Heart left ventricle (tissue), 16 donors: ENCODE measurements at regions of chr17 and their contacts with region 1.

Region 1: DNA sequence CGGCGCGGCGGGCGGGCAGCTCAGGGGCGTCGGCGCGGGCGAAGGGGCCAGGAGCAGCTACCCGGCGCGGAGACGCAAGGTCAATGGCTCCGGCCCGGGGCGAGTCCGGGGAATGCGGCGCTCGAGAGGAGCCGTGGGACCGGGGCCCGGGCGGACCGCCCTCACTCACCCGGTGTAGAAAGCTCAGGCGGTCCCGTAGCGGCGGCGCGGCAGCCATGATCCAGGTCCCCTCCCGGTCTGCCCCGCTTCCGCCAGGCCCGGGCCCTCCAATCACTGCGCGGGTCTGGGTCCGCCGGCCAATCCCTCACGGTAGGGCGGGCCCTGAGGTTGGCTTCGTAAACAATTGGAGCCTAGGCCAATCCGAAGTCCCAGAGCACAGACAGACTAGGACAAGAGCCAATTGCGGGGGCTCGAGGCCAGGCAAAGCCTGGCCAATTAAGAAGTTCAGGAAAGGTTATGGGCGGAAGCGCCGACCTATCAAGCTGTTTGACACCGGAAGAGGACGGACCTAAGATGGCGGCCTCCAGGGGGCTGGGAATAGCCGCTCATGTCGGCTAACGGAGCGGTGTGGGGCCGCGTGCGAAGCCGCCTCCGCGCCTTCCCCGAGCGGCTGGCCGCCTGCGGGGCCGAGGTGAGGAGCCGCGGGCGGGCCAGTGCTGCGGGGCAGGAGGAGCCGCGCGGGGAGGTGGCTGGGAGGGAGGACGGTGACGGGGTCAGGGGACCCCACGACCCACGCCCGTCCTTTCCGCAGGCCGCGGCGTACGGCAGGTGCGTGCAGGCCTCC is at the starts of genes NDUFAF8 and TEPSIN:
- DNase-seq: peak; percentile 97 to 98 (median 98)
- ATAC-seq: peak; percentile 97 to 99 (median 98)
- H3K4me3 ChIP-seq: peak within 1 kb of the TSS; percentile 82 to 100 (median 92)
- H3K27ac ChIP-seq: peak within 1 kb of the TSS; percentile 43 to 93 (median 86)
- H3K4me1 ChIP-seq: peaks cover 5 to 39% (median 25%) of the 10 kb centered on the region in 12 donors
- H3K27me3 ChIP-seq: no peaks in the 10 kb centered on the region
- CTCF ChIP-seq: peak in 2 of 12 donors; percentile 6 to 28
- POLR2A ChIP-seq: peak in 1 of 2 donors; percentile 69
- total RNA-seq, gene NDUFAF8: 31.8 to 77.1 (median 50.2) TPM
- total RNA-seq, gene TEPSIN: 6.8 to 16.0 (median 10.2) TPM

Region 2: GRCh38 chr17:80991645-80992076 is 247.3 kb before region 1 on chr17 and contains the start of gene CHMP6:
- intact Hi-C with region 1: loop called in 2 of 10 experiments (anchors 5 kb)
- DNase-seq: peak; percentile 80 to 90 (median 87)
- ATAC-seq: peak in 3 of 4 donors; percentile 50 to 69 (median 69)
- H3K4me3 ChIP-seq: peak within 1 kb of the TSS; percentile 68 to 100 (median 96)
- H3K27ac ChIP-seq: peak within 1 kb of the TSS in 11 of 12 donors; percentile 41 to 86 (median 64)
- H3K4me1 ChIP-seq: peaks cover 0 to 40% (median 27%) of the 10 kb centered on the region in 12 donors
- H3K27me3 ChIP-seq: peaks cover 0 to 7% (median 0%) of the 10 kb centered on the region in 9 donors
- CTCF ChIP-seq: peak in 7 of 12 donors; percentile 28 to 48 (median 36)
- POLR2A ChIP-seq: peak in 1 of 2 donors; percentile 48
- total RNA-seq, gene CHMP6: 17.9 to 25.9 (median 19.4) TPM

Region 3: DNA sequence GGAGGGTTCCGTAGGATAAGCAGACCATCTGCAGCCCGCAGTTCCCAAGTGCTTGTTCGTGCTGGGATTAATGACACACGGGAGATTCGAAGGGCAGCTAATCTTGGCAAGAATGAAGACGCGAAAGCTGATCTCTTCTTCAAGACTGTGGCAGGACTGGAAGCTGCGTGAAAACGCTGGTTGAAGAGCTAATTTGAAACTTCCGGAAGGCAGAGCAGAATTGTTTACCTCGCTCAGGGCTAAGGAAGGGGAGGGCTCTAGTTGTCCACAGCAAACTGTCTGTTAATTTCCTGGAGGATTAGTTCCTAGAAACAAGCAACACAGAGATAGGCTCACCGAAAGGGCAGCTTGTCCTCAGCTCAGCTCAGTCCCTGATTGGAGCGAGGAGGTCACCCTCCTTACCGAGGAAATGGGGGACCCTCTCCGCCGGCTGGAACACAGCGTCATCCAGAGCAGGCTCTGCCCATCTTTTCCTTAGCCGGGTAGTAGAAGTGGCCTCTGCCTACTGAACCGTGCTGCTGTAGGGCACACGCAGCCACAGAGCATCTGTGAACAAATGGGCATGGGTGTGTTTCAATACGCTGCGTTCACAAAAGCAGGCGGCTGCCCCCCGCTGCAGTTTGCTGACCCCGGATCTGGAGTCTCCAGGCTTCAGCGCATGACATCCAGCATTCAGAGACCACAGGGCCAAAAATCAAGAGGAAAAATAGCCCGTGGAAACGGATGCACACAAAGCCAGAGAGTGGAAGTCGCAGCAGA is 220.8 kb before region 1 on chr17:
- intact Hi-C with region 1: loop called in 1 of 10 experiments (anchors 10 kb)
- DNase-seq: peak in 1 of 5 donors; percentile 40
- ATAC-seq: peak; percentile 41 to 71 (median 45)
- H3K4me3 ChIP-seq: peak overlapping the region in 11 of 12 donors; percentile 16 to 56 (median 41)
- H3K27ac ChIP-seq: peak overlapping the region; percentile 8 to 87 (median 71)
- H3K4me1 ChIP-seq: peaks cover 0 to 30% (median 19%) of the 10 kb centered on the region in 12 donors
- H3K27me3 ChIP-seq: no peaks in the 10 kb centered on the region
- CTCF ChIP-seq: no peak
- POLR2A ChIP-seq: no peak

Region 4: DNA sequence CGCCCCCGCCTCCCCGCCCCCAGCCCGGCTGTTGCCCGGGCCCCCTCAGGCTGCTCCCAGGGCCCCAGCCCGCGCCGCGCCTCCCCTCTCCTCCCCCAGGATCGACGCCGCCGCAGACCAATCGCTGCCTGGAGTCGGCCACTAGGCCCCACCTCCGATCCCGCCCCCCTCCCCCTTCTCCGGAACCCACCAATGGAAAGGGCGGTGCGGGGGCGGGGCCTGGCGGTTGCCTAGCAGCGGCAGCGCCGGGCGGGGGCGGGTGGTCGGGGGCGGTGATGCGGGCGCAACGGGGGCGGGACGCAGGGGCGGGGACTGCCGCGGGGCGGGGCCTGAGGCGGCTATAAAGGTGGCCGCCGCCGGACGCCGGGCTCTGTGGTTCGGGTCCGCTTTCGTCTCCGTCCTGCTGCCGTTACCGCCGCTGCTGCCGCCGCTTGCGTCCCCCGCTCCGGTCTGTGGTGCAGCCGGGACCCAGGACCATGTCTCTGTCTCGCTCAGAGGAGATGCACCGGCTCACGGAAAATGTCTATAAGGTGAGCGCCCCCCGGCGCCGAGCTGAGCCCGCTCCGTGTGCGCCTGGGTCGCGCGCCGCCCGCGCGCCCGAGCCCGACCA is 204.1 kb before region 1 on chr17 and contains the start of gene BAIAP2:
- intact Hi-C with region 1: loop called in 1 of 10 experiments (anchors 10 kb)
- DNase-seq: peak; percentile 96 to 99 (median 98)
- ATAC-seq: peak; percentile 66 to 81 (median 80)
- H3K4me3 ChIP-seq: peak within 1 kb of the TSS; percentile 51 to 89 (median 71)
- H3K27ac ChIP-seq: peak within 1 kb of the TSS; percentile 14 to 75 (median 66)
- H3K4me1 ChIP-seq: peaks cover 0 to 85% (median 62%) of the 10 kb centered on the region in 12 donors
- H3K27me3 ChIP-seq: peaks cover 0 to 6% (median 0%) of the 10 kb centered on the region in 9 donors
- CTCF ChIP-seq: peak in 3 of 12 donors; percentile 13 to 19 (median 13)
- POLR2A ChIP-seq: peak; percentile 86 to 99
- total RNA-seq, gene BAIAP2: 8.9 to 30.2 (median 18.8) TPM

Region 5: GRCh38 chr17:81142301-81143199 is 96.5 kb before region 1 on chr17:
- intact Hi-C with region 1: loop called (anchors 1 to 5 kb)
- DNase-seq: peak; percentile 71 to 88 (median 81)
- ATAC-seq: peak; percentile 90 to 97 (median 94)
- H3K4me3 ChIP-seq: no peak overlapping the region
- H3K27ac ChIP-seq: no peak overlapping the region
- H3K4me1 ChIP-seq: peaks cover 0 to 9% (median 4%) of the 10 kb centered on the region in 12 donors
- H3K27me3 ChIP-seq: no peaks in the 10 kb centered on the region
- CTCF ChIP-seq: peak; percentile 57 to 82 (median 70)
- POLR2A ChIP-seq: no peak